ENCODE measurements at regions of chr3 and their contacts with region 1.

Region 1: GRCh38 chr3:191051037-191051436 is 148.0 kb upstream of the OSTN start:
- DNase-seq: peak in 1 of 2 experiments; percentile 58
- H3K4me3 ChIP-seq: no peak overlapping the region
- H3K27ac ChIP-seq: no peak overlapping the region
- H3K4me1 ChIP-seq: no peaks in the 10 kb centered on the region
- H3K27me3 ChIP-seq: no peaks in the 10 kb centered on the region
- CTCF ChIP-seq: peak; percentile 87

Region 2: DNA sequence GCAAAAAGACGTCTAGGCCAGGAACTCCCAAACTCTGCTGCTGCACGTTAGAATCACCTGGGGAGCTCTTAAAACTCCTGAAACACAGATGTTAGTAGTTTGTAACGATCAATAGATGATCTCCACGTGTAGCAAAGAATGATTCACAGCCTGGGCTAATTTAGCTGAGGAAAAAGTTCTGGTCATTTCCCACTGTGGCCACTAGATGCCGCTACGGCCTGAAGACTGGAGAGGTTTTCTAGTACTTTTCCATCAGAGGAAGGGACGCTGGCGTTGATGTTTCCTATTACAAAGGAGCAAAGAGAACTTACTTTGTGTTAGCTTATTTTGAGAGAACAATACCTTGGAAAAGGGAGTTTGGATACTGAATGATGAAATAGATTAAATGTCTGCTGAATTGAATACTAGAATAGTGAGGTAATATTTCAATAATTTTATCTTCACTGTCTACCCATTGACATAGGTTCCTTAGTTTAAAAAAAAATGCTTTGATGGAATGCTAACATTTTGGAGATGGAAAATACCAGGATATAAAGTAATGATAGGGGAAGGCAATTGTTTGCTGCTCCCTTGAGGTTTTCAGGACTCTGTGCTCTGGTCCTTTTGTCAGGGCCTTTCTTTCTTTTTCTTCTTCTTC is 1089.4 kb before region 1 on chr3:
- CTCF ChIA-PET with region 1: no interaction called
- POLR2A ChIA-PET with region 1: no interaction called
- intact Hi-C with region 1: loop called (anchors 2 kb)
- DNase-seq: peak; percentile 79 to 85
- H3K4me3 ChIP-seq: no peak overlapping the region
- H3K27ac ChIP-seq: no peak overlapping the region
- H3K4me1 ChIP-seq: peaks cover 7% of the 10 kb centered on the region
- H3K27me3 ChIP-seq: no peaks in the 10 kb centered on the region
- CTCF ChIP-seq: peak; percentile 100

Region 3: DNA sequence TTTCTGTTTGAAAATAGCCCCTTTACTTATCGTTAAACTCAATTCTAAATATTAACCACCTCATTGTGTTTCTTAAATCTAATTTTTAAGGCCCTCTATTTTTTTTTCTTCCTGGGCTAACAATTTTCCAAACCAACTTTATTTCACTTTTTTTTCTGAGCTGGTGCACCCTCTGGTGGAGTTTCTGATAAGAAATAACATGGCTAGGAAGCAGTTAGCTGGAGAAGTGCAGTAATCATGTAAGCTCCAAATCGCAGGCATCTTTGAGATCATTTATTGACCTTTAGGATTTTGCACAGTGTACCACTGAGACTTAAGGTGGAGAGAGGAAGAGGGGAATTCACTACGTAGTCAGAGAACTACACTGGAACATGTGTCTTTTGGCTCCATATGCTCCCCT is 607.8 kb before region 1 on chr3:
- CTCF ChIA-PET with region 1: no interaction called
- POLR2A ChIA-PET with region 1: no interaction called
- intact Hi-C with region 1: loop called (anchors 10 kb)
- DNase-seq: no peak
- H3K4me3 ChIP-seq: no peak overlapping the region
- H3K27ac ChIP-seq: no peak overlapping the region
- H3K4me1 ChIP-seq: peaks cover 17% of the 10 kb centered on the region
- H3K27me3 ChIP-seq: no peaks in the 10 kb centered on the region
- CTCF ChIP-seq: peak; percentile 72

Region 4: GRCh38 chr3:190811775-190812480 is 239.1 kb before region 1 on chr3:
- CTCF ChIA-PET with region 1: no interaction called
- POLR2A ChIA-PET with region 1: interaction called, 4 read pairs
- intact Hi-C with region 1: loop called (anchors 5 kb)
- DNase-seq: peak in 1 of 2 experiments; percentile 41
- H3K4me3 ChIP-seq: no peak overlapping the region
- H3K27ac ChIP-seq: no peak overlapping the region
- H3K4me1 ChIP-seq: no peaks in the 10 kb centered on the region
- H3K27me3 ChIP-seq: no peaks in the 10 kb centered on the region
- CTCF ChIP-seq: peak; percentile 80

Region 5: GRCh38 chr3:190855151-190855550 is 195.9 kb before region 1 on chr3:
- CTCF ChIA-PET with region 1: no interaction called
- POLR2A ChIA-PET with region 1: no interaction called
- intact Hi-C with region 1: no loop called
- DNase-seq: no peak
- H3K4me3 ChIP-seq: no peak overlapping the region
- H3K27ac ChIP-seq: no peak overlapping the region
- H3K4me1 ChIP-seq: no peaks in the 10 kb centered on the region
- H3K27me3 ChIP-seq: no peaks in the 10 kb centered on the region
- CTCF ChIP-seq: no peak

Region 6: GRCh38 chr3:190883973-190884832 is 166.8 kb before region 1 on chr3:
- CTCF ChIA-PET with region 1: interaction called, 8 read pairs
- POLR2A ChIA-PET with region 1: no interaction called
- intact Hi-C with region 1: loop called (anchors 1 kb)
- DNase-seq: peak; percentile 48 to 50
- H3K4me3 ChIP-seq: no peak overlapping the region
- H3K27ac ChIP-seq: no peak overlapping the region
- H3K4me1 ChIP-seq: no peaks in the 10 kb centered on the region
- H3K27me3 ChIP-seq: no peaks in the 10 kb centered on the region
- CTCF ChIP-seq: peak; percentile 97

Region 7: DNA sequence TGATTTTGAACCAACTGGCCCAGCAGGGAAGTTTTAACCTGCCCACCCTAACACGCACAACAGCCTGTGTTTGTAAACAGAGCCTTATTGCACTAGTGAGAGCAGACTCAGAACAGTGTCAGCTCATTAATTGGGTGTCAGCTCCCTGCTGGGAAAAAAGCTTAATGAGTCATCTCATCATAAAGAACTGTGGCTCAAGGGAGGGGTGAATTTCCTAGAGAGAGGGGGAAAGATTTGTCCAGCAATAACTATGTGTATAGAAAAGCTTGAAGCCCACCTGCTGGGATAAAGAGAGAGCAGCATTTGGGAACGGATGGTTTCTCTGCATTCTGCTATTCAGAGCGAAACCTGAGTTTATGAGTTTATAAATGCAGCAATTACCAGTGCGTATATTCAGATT is 139.7 kb before region 1 on chr3:
- CTCF ChIA-PET with region 1: interaction called, 11 read pairs
- POLR2A ChIA-PET with region 1: no interaction called
- intact Hi-C with region 1: no loop called
- DNase-seq: no peak
- H3K4me3 ChIP-seq: no peak overlapping the region
- H3K27ac ChIP-seq: no peak overlapping the region
- H3K4me1 ChIP-seq: no peaks in the 10 kb centered on the region
- H3K27me3 ChIP-seq: no peaks in the 10 kb centered on the region
- CTCF ChIP-seq: no peak

Region 8: GRCh38 chr3:191076903-191077552 is 26.0 kb after region 1 on chr3:
- CTCF ChIA-PET with region 1: no interaction called
- POLR2A ChIA-PET with region 1: no interaction called
- intact Hi-C with region 1: loop called (anchors 1 kb)
- DNase-seq: no peak
- H3K4me3 ChIP-seq: no peak overlapping the region
- H3K27ac ChIP-seq: no peak overlapping the region
- H3K4me1 ChIP-seq: no peaks in the 10 kb centered on the region
- H3K27me3 ChIP-seq: no peaks in the 10 kb centered on the region
- CTCF ChIP-seq: no peak